Vagina (tissue), 2 donors: ENCODE measurements at regions of chr21 and their contacts with region 1.

Region 1: GRCh38 chr21:46056450-46056903 is 41.4 kb upstream of the COL6A2 start:
- DNase-seq: peak in 1 of 2 donors; percentile 95
- H3K4me3 ChIP-seq: peak overlapping the region in 1 of 2 donors; percentile 4
- H3K27ac ChIP-seq: peak overlapping the region; percentile 90
- H3K4me1 ChIP-seq: peaks cover 40% of the 10 kb centered on the region
- H3K27me3 ChIP-seq: no peaks in the 10 kb centered on the region
- CTCF ChIP-seq: no peak
- POLR2A ChIP-seq: peak in 1 of 2 donors; percentile 55

Region 2: DNA sequence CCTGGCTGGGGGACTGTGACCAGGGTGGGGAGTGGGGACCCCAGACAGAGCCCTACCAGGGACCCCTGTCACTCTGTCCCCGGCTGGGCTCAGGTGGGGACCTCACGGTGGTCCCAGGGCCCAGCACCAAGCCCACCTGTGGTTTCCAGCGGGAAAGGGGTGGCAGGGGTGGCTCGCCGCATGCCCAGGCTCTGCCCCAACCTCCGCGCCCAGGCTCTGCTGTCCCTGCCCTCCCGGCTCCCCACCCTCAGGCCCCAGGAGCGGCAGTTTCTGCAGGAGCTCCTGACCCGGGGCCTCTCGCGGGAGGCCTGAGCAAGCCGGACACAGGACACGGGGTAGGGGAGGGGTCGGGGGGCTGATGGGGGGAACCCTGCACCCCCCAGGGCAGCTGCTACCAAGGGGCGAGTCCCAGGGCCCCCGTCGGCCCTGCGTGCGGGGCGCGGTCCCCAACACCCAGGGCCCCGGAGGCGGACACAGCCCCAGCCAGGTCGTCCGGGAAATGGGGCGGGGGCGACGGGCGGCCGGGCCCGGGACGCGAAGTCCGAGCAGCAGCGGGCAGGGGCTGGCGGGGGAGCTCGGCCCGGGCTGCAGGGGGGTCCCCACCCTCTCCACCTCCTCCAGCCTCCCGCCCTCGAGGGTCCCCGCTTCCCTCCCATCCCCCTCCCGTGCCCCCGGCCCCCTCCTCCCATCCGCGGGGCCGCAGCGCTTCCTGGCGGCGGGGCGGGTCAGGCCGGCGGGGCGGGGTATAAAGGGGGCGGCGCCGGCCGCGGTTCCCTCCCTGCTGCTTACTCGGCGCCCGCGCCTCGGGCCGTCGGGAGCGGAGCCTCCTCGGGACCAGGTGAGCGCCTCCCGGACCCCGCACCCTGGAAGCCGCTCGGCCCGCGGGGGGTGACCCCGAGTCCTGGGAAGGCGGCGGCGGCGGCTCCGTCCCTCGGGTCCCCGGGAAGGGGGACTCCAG is 41.1 kb after region 1 on chr21 and contains the start of gene COL6A2:
- intact Hi-C with region 1: loop called (anchors 5 kb)
- DNase-seq: peak; percentile 86 to 87
- H3K4me3 ChIP-seq: peak within 1 kb of the TSS; percentile 72 to 80
- H3K27ac ChIP-seq: peak within 1 kb of the TSS; percentile 98
- H3K4me1 ChIP-seq: peaks cover 46% of the 10 kb centered on the region
- H3K27me3 ChIP-seq: no peaks in the 10 kb centered on the region
- CTCF ChIP-seq: peak in 1 of 3 experiments; percentile 46
- POLR2A ChIP-seq: peak in 1 of 2 donors; percentile 90
- total RNA-seq, gene COL6A2: 535 TPM